ENCODE measurements at regions of chr1 and their contacts with region 1.

Region 1: GRCh38 chr1:172144445-172145061 is 275.9 kb upstream of the C1orf105 start:
- DNase-seq: peak; percentile 63 to 74
- ATAC-seq: peak; percentile 80 to 94
- H3K4me3 ChIP-seq: peak overlapping the region; percentile 47 to 53 (median 48)
- H3K27ac ChIP-seq: peak overlapping the region; percentile 65 to 78 (median 72)
- H3K4me1 ChIP-seq: peaks cover 0 to 5% of the 10 kb centered on the region in 2 donors
- H3K27me3 ChIP-seq: no peaks in the 10 kb centered on the region
- CTCF ChIP-seq: no peak
- POLR2A ChIP-seq: peak; percentile 39 to 81

Region 2: DNA sequence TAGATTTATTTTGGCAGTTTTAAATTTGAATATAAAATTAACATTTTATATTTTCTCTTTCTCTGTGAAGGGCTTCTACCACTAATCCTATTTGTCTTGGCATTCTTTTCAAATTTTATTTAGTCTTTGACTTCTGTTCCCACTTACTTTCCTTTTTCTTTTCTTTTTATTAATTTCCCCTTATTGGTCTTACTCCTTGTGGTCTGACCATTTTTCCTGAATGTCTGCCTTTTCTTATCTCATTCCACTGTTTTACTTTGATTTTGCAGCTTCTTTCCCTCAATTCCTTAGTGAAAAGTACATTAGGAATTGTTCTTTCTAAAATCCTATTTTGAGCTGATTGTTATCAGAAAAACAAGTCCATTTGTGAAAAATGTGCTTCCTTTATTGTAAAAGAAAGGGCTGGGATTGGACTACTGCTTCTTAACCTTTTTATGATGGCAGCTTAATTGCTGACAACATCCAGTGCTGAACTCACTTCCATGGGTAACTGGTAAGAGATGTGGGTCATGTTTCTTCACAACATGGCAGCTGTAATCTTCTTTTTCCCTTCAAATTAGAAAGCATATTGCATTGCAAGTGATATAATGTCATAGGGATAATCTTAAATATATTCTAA is 18.6 kb before region 1 on chr1:
- in situ Hi-C with region 1: no loop called
- intact Hi-C with region 1: no loop called
- DNase-seq: no peak
- ATAC-seq: no peak
- H3K4me3 ChIP-seq: no peak overlapping the region
- H3K27ac ChIP-seq: no peak overlapping the region
- H3K4me1 ChIP-seq: no peaks in the 10 kb centered on the region
- H3K27me3 ChIP-seq: no peaks in the 10 kb centered on the region
- CTCF ChIP-seq: no peak
- POLR2A ChIP-seq: no peak

Region 3: DNA sequence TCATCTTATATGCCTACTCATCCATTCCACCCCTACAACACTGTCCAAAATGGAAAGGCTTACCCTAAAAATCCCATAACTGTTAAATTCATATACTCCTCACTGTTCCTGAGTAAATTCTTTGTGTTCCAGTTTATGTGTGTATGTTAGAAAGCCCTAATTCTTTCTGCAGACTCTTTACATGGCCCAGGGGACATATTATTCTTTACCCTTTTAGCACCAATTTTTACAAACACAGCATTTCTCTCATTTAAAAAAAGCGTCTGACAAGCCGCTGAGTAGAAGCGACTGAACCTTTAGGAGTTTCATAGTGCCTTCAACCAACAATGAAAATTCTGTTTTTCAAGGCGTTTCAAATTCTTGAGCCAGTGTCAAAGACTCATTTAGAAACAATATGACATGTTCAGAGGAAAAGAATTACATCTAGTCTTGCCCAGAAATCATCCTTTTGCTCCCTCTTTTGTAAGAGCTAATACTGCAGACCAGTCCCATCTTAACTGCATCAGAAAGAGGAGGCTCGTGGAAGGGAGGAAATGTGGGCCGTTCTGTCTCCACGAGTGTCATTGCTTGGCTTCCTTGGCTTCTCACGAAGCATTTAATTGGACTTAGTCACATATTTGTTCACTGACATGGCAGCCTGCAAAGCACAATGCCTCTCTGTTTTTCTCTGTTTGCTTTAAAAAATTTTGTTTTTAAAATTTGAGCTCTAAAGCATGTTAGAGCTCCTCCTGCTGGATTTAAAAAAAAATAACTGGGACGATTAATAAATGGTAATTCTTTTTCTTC is 254.6 kb after region 1 on chr1:
- in situ Hi-C with region 1: no loop called
- intact Hi-C with region 1: loop called (anchors 5 kb)
- DNase-seq: peak; percentile 34 to 61
- ATAC-seq: peak; percentile 83 to 90
- H3K4me3 ChIP-seq: peak overlapping the region in 1 of 4 donors; percentile 20
- H3K27ac ChIP-seq: peak overlapping the region; percentile 37 to 60 (median 45)
- H3K4me1 ChIP-seq: peaks cover 4 to 13% of the 10 kb centered on the region in 2 donors
- H3K27me3 ChIP-seq: no peaks in the 10 kb centered on the region
- CTCF ChIP-seq: peak in 4 of 5 experiments; percentile 21 to 50 (median 38)
- POLR2A ChIP-seq: no peak

Region 4: GRCh38 chr1:174005032-174005431 is 1860.5 kb after region 1 on chr1:
- in situ Hi-C with region 1: no loop called
- intact Hi-C with region 1: loop called (anchors 10 kb)
- DNase-seq: no peak
- ATAC-seq: peak; percentile 23 to 41
- H3K4me3 ChIP-seq: no peak overlapping the region
- H3K27ac ChIP-seq: peak overlapping the region in 3 of 4 donors; percentile 8 to 84 (median 38)
- H3K4me1 ChIP-seq: peaks cover 39 to 54% of the 10 kb centered on the region in 2 donors
- H3K27me3 ChIP-seq: no peaks in the 10 kb centered on the region
- CTCF ChIP-seq: no peak
- POLR2A ChIP-seq: no peak